HepG2 (cell line): ENCODE measurements at regions of chr7 and their contacts with region 1.

Region 1: GRCh38 chr7:135211179-135211945 is at the start of gene WDR91:
- DNase-seq: peak; percentile 85
- ATAC-seq: peak; percentile 90
- H3K4me3 ChIP-seq: peak within 1 kb of the TSS; percentile 86 to 98 (median 96)
- H3K27ac ChIP-seq: peak within 1 kb of the TSS; percentile 54
- H3K4me1 ChIP-seq: peaks cover 66% of the 10 kb centered on the region
- H3K27me3 ChIP-seq: no peaks in the 10 kb centered on the region; a peak in 1 of 5 replicates
- CTCF ChIP-seq: peak; percentile 39; the same call in 1 of the 2 replicates
- EP300 ChIP-seq: no peak
- POLR2A ChIP-seq: peak; percentile 69 to 88
- RAD21 ChIP-seq: 0 out of 2 replicates have a peak, but pooled peaks have one; percentile 11
- total RNA-seq, gene WDR91: 10.0 and 12.1 TPM in 2 replicates

Region 2: DNA sequence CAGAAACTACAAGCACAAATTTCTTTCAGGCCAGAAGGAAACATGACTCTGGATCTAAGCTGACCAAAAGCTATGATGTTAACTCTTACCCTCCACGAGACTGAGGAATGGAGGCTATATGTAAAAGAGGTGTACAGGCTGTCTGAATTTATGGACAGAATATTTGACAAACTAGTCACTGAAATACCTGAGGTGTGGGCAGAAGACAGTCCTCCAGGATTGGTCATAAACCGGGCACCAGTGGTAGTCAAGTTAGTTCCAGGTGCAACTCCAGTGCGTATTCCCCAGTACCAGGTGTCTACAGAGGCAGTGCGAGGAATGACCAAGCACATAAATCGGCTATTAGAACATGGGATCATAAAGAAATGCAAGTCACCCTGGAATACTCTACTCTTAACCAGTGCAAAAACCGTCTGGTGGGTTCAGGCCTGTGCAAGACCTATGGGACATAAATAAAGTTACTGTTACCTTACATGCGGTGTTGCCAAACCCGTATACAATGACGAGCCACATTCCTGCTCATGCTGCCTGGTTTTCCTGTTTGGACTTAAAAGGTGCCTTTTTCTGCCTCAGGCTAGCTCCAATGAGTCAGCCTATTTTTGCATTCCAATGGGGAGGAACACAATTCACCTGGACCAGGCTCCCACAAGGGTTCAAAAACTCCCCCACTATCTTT is 34.2 kb before region 1 on chr7:
- CTCF ChIA-PET with region 1: no interaction called
- POLR2A ChIA-PET with region 1: interaction called, 4 read pairs
- in situ Hi-C with region 1: loop called (anchors 5 kb)
- intact Hi-C with region 1: loop called (anchors 2 kb)
- DNase-seq: peak; percentile 26
- ATAC-seq: peak; percentile 29; the same call in 2 of the 3 replicates
- H3K4me3 ChIP-seq: no peak overlapping the region
- H3K27ac ChIP-seq: no peak overlapping the region
- H3K4me1 ChIP-seq: peaks cover 43% of the 10 kb centered on the region
- H3K27me3 ChIP-seq: no peaks in the 10 kb centered on the region
- CTCF ChIP-seq: no peak
- EP300 ChIP-seq: no peak
- POLR2A ChIP-seq: no peak
- RAD21 ChIP-seq: no peak

Region 3: GRCh38 chr7:135253898-135254771 is 42.8 kb after region 1 on chr7:
- CTCF ChIA-PET with region 1: no interaction called
- POLR2A ChIA-PET with region 1: interaction called, 3 read pairs
- in situ Hi-C with region 1: no loop called
- intact Hi-C with region 1: loop called (anchors 5 kb)
- DNase-seq: peak; percentile 50
- ATAC-seq: peak; percentile 76
- H3K4me3 ChIP-seq: peak overlapping the region in 2 of 3 experiments; percentile 35 to 51; a peak in 4 of 6 replicates
- H3K27ac ChIP-seq: no peak overlapping the region
- H3K4me1 ChIP-seq: peaks cover 60% of the 10 kb centered on the region
- H3K27me3 ChIP-seq: no peaks in the 10 kb centered on the region; a peak in 1 of 5 replicates
- CTCF ChIP-seq: no peak
- EP300 ChIP-seq: 0 out of 4 replicates have a peak, but pooled peaks of 1 of the 2 experiments have one; percentile 8
- POLR2A ChIP-seq: no peak
- RAD21 ChIP-seq: no peak